ENCODE measurements at regions of chr6 and their contacts with region 1.

Region 1: DNA sequence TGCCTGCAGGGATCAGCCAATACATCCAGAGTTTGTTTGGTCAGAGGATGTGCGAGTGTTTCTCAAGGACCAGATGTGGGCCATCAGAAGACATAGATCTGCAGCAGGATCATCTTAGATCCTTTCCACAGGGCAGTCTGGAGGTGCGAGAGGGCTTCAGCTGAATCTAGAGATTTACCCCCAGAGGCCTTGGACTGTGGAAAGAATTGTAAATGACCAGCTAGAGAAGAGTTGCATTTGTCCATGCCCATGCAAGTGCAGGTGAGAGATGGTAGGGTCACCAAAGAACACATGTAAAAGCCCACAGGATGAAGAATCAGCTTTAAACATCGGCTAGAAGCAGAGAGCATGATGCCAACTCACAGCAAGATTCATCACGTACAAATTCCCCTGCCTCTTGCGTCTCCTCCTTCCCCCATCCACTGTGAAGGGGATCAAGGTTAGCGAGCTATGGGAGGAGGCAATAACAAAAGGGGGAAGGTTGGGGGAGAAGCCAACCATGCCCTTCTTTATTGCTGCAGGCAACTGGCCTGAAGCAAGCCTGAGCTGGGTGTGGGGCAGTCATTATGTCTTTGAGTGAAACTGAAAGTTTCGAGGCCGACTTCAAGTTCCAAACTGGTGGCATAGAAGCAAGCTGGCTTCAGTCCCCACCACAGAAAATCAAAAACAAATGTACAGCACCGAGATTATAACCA is 83.5 kb downstream of the SCML4 start:
- DNase-seq: peak; percentile 66
- H3K4me3 Mint-ChIP-seq: peak overlapping the region; percentile 61
- H3K27ac Mint-ChIP-seq: peak overlapping the region; percentile 93
- H3K4me1 Mint-ChIP-seq: peaks cover 68% of the 10 kb centered on the region
- H3K27me3 Mint-ChIP-seq: no peaks in the 10 kb centered on the region

Region 2: GRCh38 chr6:107727096-107727761 is 13.4 kb before region 1 on chr6:
- CTCF ChIA-PET with region 1: interaction called, 12 read pairs
- POLR2A ChIA-PET with region 1: no interaction called
- DNase-seq: no peak
- H3K4me3 Mint-ChIP-seq: no peak overlapping the region
- H3K27ac Mint-ChIP-seq: no peak overlapping the region
- H3K4me1 Mint-ChIP-seq: peaks cover 86% of the 10 kb centered on the region
- H3K27me3 Mint-ChIP-seq: no peaks in the 10 kb centered on the region

Measured in activated CD4-positive, alpha-beta T cell treated with anti-CD3 and anti-CD28 coated beads, Interleukin-2, amount 10 ng/mL, durations not matched to agents 7 days and 5 days (primary cell).